Colonic mucosa (tissue), 4 donors: ENCODE measurements at regions of chr2 and their contacts with region 1.

Region 1: DNA sequence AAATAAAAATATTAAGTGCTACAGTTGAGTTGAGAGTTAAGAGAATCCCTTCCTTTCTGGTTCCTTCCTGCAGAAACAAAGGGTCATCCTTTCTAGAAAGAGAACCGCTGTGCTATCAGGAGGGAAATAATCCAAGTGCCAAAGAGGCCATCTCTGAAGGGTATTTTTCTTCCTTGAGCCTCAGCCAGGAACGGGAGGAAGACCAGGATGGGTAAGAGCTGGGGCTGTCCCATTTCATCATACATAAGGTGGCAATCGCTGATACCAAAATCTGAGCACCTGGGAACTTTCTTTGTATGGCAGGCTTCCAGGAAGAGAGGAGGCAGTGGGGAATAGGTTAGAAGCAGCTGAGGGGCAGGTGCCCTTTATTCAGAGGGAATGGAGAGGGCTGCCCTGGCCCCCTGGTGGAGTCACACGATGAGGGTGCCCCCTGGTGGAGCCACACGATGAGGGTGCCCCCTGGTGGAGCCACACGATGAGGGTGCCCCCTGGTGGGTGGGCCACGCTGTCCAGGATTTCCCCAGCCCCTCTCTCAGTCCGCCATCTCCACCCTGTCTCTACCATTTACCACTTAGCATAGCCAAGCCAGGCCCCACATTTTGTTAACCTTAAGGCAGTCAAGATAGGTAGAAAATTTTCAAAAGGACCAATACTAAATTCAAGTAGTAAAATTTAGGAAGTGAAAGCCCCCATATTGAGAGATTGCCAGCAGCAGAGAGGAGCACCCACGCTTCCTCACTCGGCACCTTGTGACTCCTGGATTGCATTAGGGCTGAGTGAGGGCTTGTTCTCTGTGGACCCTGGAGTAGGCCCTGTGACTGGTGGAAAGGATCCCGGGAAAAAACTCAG is 10.5 kb upstream of the FAM228A start:
- DNase-seq: peak; percentile 24
- H3K4me3 ChIP-seq: no peak overlapping the region
- H3K27ac ChIP-seq: no peak overlapping the region
- H3K4me1 ChIP-seq: no peaks in the 10 kb centered on the region
- H3K27me3 ChIP-seq: no peaks in the 10 kb centered on the region
- CTCF ChIP-seq: peak; percentile 58

Region 2: GRCh38 chr2:23777826-23778225 is 386.5 kb before region 1 on chr2:
- intact Hi-C with region 1: no loop called
- DNase-seq: no peak
- H3K4me3 ChIP-seq: no peak overlapping the region
- H3K27ac ChIP-seq: no peak overlapping the region
- H3K4me1 ChIP-seq: no peaks in the 10 kb centered on the region
- H3K27me3 ChIP-seq: no peaks in the 10 kb centered on the region
- CTCF ChIP-seq: no peak

Region 3: GRCh38 chr2:23824777-23825212 is 339.6 kb before region 1 on chr2:
- intact Hi-C with region 1: loop called (anchors 10 kb)
- DNase-seq: peak; percentile 38
- H3K4me3 ChIP-seq: no peak overlapping the region
- H3K27ac ChIP-seq: no peak overlapping the region
- H3K4me1 ChIP-seq: no peaks in the 10 kb centered on the region
- H3K27me3 ChIP-seq: no peaks in the 10 kb centered on the region
- CTCF ChIP-seq: peak; percentile 63

Region 4: DNA sequence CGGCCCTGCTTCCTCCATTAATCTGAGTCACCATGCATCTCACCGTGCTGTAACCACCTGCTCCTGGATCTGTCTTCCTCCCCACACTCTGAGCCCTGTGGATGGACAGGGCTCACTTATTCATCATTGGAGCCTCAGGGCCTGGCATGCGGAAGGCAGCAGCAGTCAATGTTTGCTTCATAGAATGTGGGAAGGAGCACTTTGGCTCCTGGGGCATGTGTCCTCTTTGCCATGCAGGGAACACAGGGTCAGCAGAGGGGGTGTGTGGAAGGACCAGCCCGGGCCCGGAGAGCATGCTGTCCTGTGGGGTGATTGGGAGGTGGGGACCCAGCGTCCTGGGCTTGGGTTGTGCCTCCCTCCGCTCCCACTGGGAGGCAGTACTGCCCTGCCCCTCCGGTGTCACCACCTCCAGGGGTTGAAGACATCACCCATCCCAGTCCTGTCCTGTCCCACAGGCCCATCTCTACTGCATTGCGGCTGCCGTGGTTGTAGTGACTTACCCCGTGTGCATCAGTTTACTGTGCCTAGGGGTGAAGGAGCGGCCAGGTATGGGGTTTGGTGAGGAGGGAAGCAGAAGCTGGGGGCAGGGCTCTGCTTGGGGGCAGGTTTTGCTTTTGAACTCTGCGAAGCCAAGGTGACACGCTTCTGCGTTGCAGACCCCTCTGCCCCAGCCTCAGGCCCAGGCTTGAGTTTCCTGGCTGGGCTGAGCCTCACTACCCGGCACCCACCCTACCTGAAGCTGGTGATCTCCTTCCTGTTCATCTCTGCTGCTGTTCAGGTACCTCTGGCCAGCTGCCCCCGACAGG is 143.0 kb before region 1 on chr2:
- intact Hi-C with region 1: loop called (anchors 5 kb)
- DNase-seq: no peak
- H3K4me3 ChIP-seq: no peak overlapping the region
- H3K27ac ChIP-seq: no peak overlapping the region
- H3K4me1 ChIP-seq: no peaks in the 10 kb centered on the region
- H3K27me3 ChIP-seq: no peaks in the 10 kb centered on the region
- CTCF ChIP-seq: peak; percentile 31

Region 5: DNA sequence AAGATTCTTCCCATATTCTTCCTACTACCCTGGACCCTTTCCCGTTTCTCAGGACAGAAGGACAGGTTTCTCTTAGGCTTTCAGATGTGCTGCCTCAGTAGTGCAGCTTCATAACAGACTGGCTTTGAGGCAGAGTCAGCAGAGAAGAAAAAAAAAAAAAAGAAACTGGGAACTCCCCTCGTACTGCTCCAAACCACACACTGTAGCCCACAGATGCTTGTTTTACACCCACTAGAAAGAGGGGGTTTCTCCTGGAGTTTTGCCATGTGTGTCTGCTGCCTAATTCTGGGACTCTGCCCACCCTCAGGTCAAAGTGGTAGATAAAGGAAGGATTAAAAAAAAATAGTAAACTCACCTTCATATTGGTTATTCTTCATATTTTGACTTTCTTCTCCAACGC is 422.6 kb after region 1 on chr2:
- intact Hi-C with region 1: no loop called
- DNase-seq: no peak
- H3K4me3 ChIP-seq: no peak overlapping the region
- H3K27ac ChIP-seq: no peak overlapping the region
- H3K4me1 ChIP-seq: no peaks in the 10 kb centered on the region
- H3K27me3 ChIP-seq: no peaks in the 10 kb centered on the region
- CTCF ChIP-seq: no peak